HepG2 (cell line): ENCODE measurements at regions of chr22 and their contacts with region 1.

Region 1: GRCh38 chr22:21867528-21868266 is at the start of gene MAPK1:
- DNase-seq: peak; percentile 79
- ATAC-seq: peak; percentile 96
- H3K4me3 ChIP-seq: peak within 1 kb of the TSS; percentile 80 to 95 (median 88)
- H3K27ac ChIP-seq: peak within 1 kb of the TSS; percentile 82
- H3K4me1 ChIP-seq: peaks cover 37% of the 10 kb centered on the region
- H3K27me3 ChIP-seq: no peaks in the 10 kb centered on the region; a peak in 1 of 5 replicates
- CTCF ChIP-seq: peak; percentile 72
- EP300 ChIP-seq: 0 out of 4 replicates have a peak, but pooled peaks of 1 of the 2 experiments have one; percentile 3
- POLR2A ChIP-seq: peak; percentile 82 to 92
- RAD21 ChIP-seq: peak; percentile 52; the same call in 1 of the 2 replicates
- total RNA-seq, gene MAPK1: 107 and 154 TPM in 2 replicates

Region 2: DNA sequence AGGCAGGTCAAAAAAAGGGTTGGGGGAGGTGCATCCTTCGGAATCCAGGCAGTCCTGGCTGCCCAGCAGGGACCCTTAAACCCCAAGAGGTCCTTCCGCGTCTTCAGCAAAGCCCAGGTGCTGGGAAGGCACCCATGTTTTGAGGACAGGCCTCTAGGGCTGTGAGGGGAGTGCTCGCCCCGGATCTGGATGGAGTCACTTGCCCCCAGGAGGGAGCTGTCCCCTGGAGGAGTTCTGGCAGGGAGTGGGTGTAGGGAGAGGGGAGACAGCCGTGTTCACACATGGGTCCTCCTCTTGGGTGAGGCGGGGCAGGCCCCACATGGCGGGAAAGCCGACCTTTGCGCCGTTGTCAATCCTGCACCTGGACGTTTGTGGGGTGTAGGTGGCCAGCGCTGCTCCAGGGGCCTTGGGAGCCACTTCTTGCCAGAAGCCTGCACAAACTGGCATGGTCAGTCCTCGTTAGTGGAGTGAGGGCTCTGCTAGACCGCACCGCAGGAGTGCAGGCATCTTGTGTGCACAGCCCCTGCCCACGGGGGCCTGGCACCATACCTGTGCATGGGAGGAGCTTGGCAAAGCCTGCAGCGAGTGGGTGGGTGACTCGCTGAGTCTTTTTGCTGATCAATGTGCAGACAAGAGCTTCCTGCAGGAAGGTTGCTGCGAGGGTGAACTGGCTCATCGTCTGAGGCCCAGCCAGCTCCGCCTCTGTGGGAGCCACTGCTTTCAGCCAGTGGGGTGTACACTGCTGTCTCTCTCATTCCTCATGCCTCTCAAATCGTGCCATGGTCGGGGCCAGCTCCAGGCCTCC is 185.9 kb before region 1 on chr22:
- CTCF ChIA-PET with region 1: no interaction called
- POLR2A ChIA-PET with region 1: no interaction called
- in situ Hi-C with region 1: no loop called
- intact Hi-C with region 1: no loop called
- DNase-seq: no peak
- ATAC-seq: no peak
- H3K4me3 ChIP-seq: no peak overlapping the region
- H3K27ac ChIP-seq: no peak overlapping the region
- H3K4me1 ChIP-seq: peaks cover 17% of the 10 kb centered on the region
- H3K27me3 ChIP-seq: no peaks in the 10 kb centered on the region; a peak in 1 of 5 replicates
- CTCF ChIP-seq: no peak
- EP300 ChIP-seq: no peak
- POLR2A ChIP-seq: no peak
- RAD21 ChIP-seq: no peak

Region 3: GRCh38 chr22:21832291-21833290 is 35.1 kb before region 1 on chr22:
- CTCF ChIA-PET with region 1: no interaction called
- POLR2A ChIA-PET with region 1: no interaction called
- in situ Hi-C with region 1: no loop called
- intact Hi-C with region 1: loop called (anchors 5 kb)
- DNase-seq: no peak
- ATAC-seq: no peak
- H3K4me3 ChIP-seq: no peak overlapping the region
- H3K27ac ChIP-seq: no peak overlapping the region
- H3K4me1 ChIP-seq: peaks cover 26% of the 10 kb centered on the region
- H3K27me3 ChIP-seq: no peaks in the 10 kb centered on the region
- CTCF ChIP-seq: no peak
- EP300 ChIP-seq: no peak
- POLR2A ChIP-seq: no peak
- RAD21 ChIP-seq: no peak

Region 4: GRCh38 chr22:21850660-21851059 is 17.0 kb before region 1 on chr22:
- CTCF ChIA-PET with region 1: no interaction called
- POLR2A ChIA-PET with region 1: no interaction called
- in situ Hi-C with region 1: no loop called
- intact Hi-C with region 1: no loop called
- DNase-seq: no peak
- ATAC-seq: no peak
- H3K4me3 ChIP-seq: no peak overlapping the region
- H3K27ac ChIP-seq: no peak overlapping the region
- H3K4me1 ChIP-seq: peaks cover 55% of the 10 kb centered on the region
- H3K27me3 ChIP-seq: no peaks in the 10 kb centered on the region
- CTCF ChIP-seq: no peak
- EP300 ChIP-seq: no peak
- POLR2A ChIP-seq: no peak
- RAD21 ChIP-seq: no peak

Region 5: DNA sequence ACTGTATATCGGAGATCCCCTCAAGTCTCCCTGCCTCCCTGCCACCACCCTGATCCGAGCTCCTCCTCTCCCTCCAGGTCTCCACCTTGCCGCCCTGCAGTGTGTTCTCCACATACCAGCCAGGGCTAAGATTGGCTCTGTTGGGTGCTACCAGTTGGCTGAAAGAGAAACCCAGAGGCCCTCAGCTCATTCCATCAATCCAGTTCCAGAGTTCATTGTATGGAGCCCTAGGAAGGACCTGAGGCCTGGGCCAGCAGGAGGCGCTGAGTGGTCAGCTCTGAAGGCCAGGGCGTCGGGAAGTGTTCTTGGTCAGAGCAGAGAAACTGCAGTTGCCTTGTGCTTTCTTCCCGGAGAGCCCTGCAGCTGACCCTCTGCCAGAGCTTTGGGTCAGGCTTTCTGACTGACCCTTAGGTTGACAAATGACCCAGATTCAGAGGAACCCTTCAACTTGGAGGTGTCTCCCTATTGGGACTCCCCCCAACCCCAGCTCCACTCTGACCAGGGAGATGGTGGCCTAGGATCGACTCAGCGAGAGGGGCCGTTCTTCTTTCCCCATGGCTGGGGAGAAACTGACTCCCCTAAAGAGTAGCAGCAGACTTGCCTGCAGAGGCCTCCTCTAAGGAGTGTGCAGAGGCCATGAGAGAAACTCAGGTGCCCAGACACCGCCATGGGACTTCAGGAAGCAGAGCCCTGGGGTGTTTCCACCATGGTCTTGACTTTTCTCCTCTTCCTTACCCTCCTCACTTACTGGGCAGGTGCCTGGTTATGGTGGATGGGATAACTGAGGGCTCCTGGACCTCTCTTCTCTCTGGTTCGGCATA is 117.3 kb after region 1 on chr22:
- CTCF ChIA-PET with region 1: no interaction called
- POLR2A ChIA-PET with region 1: no interaction called
- in situ Hi-C with region 1: no loop called
- intact Hi-C with region 1: no loop called
- DNase-seq: no peak
- ATAC-seq: peak; percentile 67
- H3K4me3 ChIP-seq: no peak overlapping the region; a peak in 1 of 6 replicates
- H3K27ac ChIP-seq: no peak overlapping the region
- H3K4me1 ChIP-seq: peaks cover 29% of the 10 kb centered on the region
- H3K27me3 ChIP-seq: peaks cover 0 to 5% of the 10 kb centered on the region in 2 experiments; a peak in 1 of 5 replicates
- CTCF ChIP-seq: peak; percentile 61
- EP300 ChIP-seq: no peak
- POLR2A ChIP-seq: no peak
- RAD21 ChIP-seq: no peak